ENCODE measurements at regions of chr4 and their contacts with region 1.

Region 1: DNA sequence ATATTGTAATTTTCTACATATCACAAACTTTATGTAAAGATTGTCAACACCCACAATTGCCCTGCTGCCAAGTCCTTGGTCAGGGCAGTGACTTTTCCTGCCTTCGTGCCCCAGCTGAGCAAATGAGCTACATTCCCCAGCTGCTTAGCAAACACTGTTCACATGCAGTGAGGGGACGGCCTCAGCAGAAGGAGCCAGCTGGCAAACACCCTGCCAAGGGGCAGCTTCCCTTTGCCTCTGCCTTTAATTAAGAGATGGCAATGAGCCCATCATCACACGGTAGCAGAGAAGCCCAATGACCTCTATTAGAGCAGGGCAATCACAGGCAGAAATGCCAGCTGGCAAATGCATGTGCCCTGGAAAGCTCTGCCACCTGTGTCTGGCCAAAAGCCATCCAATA is 253.4 kb downstream of the EPHA5 start:
- DNase-seq: no peak
- ATAC-seq: no peak
- H3K4me3 ChIP-seq: no peak overlapping the region
- H3K27ac ChIP-seq: no peak overlapping the region
- H3K4me1 ChIP-seq: no peaks in the 10 kb centered on the region
- H3K27me3 ChIP-seq: no peaks in the 10 kb centered on the region
- CTCF ChIP-seq: no peak
- EP300 ChIP-seq: no peak
- POLR2A ChIP-seq: no peak
- RAD21 ChIP-seq: no peak

Region 2: GRCh38 chr4:67261971-67262370 is 1845.1 kb after region 1 on chr4:
- CTCF ChIA-PET with region 1: no interaction called
- POLR2A ChIA-PET with region 1: no interaction called
- in situ Hi-C with region 1: no loop called
- intact Hi-C with region 1: loop called (anchors 10 kb)
- DNase-seq: no peak
- ATAC-seq: no peak
- H3K4me3 ChIP-seq: no peak overlapping the region
- H3K27ac ChIP-seq: no peak overlapping the region
- H3K4me1 ChIP-seq: no peaks in the 10 kb centered on the region
- H3K27me3 ChIP-seq: no peaks in the 10 kb centered on the region
- CTCF ChIP-seq: no peak
- EP300 ChIP-seq: no peak
- POLR2A ChIP-seq: no peak
- RAD21 ChIP-seq: no peak